Dendritic cell treated with granulocyte-macrophage colony-stimulating factor and Interleukin-4, amounts not matched to agents 40 ng/mL and 50 ng/mL, for 4 days (primary cell): ENCODE measurements at regions of chr5 and their contacts with region 1.

Region 1: GRCh38 chr5:146291421-146292074 is 47.1 kb upstream of the POU4F3 start:
- H3K4me3 Mint-ChIP-seq: no peak overlapping the region
- H3K27ac Mint-ChIP-seq: no peak overlapping the region
- H3K4me1 Mint-ChIP-seq: no peaks in the 10 kb centered on the region
- H3K27me3 Mint-ChIP-seq: no peaks in the 10 kb centered on the region

Region 2: DNA sequence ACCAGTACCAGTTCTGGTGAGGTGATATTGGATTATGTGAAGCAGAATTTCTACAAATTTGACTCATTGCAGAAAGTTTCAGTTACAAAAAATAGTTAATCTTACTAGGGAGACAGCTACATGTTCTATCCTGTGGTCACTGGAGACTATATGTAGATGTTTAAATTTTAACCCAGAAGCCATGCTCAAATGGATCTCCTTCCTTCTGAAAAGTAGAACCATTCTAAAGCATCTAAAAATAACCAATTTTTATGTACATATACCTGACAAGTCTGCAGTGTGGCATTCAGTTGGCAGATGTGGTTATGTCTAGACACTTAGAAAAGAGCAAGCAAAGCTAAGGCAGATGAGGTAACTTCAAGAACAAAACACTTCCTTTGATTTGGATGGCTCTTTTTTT is 18.4 kb before region 1 on chr5:
- intact Hi-C with region 1: no loop called
- H3K4me3 Mint-ChIP-seq: no peak overlapping the region
- H3K27ac Mint-ChIP-seq: no peak overlapping the region
- H3K4me1 Mint-ChIP-seq: no peaks in the 10 kb centered on the region
- H3K27me3 Mint-ChIP-seq: no peaks in the 10 kb centered on the region

Region 3: DNA sequence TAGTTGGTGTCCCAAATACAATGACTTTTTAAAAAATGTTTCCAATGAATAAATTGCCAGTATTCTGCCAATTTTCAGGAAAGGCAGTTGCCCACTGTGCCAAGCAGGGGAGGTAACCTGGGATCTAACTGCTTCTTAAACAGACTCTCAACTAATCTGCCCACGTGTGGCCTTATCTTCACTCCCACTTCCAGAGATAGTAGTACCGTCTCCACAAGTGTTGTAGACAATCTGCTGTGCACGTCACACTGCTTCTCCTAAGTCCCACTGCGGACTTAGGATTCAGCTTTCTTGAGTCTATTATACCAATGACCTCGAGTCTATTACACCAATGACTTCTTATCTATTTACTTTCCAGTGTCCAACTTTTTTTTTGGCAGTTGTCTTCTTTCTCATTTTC is 68.3 kb after region 1 on chr5:
- intact Hi-C with region 1: no loop called
- H3K4me3 Mint-ChIP-seq: no peak overlapping the region
- H3K27ac Mint-ChIP-seq: no peak overlapping the region
- H3K4me1 Mint-ChIP-seq: peaks cover 19% of the 10 kb centered on the region
- H3K27me3 Mint-ChIP-seq: peaks cover 17% of the 10 kb centered on the region

Region 4: DNA sequence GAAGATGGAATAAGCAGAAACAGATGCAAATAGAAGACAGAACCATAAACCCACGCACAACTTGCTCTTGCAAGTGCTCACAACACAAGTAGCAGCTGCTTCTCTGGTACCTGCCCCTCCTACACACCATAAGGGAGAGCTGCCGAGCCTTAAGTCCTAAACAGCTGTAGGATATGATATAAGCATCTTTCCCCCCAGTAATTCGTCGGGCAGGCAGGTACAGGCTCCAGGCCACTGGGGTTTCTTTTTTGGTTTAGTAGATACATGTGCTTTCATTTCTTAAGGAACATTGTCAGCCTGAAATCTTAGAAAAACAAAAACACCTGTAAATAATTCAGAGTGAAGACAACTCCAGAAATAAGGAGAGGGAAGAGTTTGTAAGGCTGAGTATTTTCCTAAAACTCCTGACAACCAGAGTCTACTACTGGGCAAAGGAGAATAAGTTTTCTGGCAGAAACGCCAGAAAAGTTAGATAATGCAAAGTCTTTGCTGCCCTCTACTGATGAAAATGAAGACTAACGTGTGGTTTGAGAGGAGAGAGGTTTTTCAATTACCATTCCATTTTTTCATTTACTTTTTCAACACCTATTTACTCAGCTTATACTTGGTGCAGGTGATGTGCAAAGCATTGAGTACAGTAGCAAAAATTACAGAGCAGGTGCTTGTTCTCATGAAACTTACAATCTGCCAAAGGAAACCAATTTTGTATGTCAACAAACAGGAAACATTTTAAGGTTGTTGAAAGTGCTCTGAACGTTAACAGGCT is 135.5 kb after region 1 on chr5:
- intact Hi-C with region 1: loop called (anchors 1 kb)
- H3K4me3 Mint-ChIP-seq: no peak overlapping the region
- H3K27ac Mint-ChIP-seq: no peak overlapping the region
- H3K4me1 Mint-ChIP-seq: no peaks in the 10 kb centered on the region
- H3K27me3 Mint-ChIP-seq: peaks cover 9% of the 10 kb centered on the region